Mammary epithelial cell (primary cell): ENCODE measurements at regions of chr3 and their contacts with region 1.

Region 1: DNA sequence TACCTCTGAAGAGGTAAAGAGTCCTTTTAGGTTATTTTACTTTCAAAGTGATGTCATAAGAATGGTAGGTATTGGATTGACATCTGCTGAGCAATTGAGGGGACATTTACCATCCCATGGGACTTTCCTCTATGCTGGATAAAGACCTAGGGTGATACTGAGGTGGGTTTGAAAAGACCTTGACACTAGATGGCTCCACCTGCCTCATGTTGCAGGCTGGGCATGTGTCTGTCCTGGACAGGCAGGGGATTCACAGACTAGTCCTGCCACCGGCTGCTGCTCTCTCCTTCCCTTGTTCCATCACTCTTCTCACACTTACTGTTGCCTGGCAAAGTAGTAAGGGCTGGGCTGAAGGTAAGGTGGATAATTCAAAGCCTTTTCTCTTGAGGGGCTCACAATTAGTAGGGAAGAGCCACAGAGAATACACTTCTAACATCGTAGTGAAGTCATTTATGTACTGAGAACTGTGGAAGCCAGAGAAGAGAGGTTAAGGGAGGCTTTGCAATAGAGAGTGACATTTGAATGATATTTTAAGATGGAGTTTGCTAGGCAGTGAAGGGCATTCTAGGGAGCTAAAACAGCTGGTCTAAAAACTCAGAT is 27.7 kb downstream of the TRAK1 start:
- DNase-seq: peak; percentile 66
- H3K4me3 ChIP-seq: no peak overlapping the region
- H3K27ac ChIP-seq: peak overlapping the region; percentile 30
- H3K4me1 ChIP-seq: peaks cover 73% of the 10 kb centered on the region
- H3K27me3 ChIP-seq: no peaks in the 10 kb centered on the region
- CTCF ChIP-seq: peak; percentile 43 to 62

Region 2: DNA sequence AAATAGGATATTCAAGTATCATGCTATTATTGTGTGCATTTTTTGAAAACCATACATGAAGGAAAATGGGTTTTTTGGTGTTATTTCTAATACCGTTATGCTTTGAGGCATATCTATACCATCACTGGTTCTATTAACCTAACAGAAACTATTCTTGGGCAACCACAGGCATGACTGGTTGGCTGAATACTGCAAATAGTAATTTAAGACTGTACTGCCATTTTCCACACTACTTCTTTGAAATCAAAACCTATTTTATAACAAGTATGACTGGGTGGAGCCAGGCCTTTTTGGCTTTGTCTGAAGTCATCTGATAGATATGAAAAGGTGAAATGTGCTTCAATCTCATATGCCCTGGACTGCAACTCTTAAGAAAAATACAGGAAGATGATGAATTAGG is 272.0 kb before region 1 on chr3:
- CTCF ChIA-PET with region 1: no interaction called
- dilution Hi-C with region 1: no loop called
- in situ Hi-C with region 1: no loop called
- intact Hi-C with region 1: no loop called
- DNase-seq: no peak
- H3K4me3 ChIP-seq: no peak overlapping the region
- H3K27ac ChIP-seq: no peak overlapping the region
- H3K4me1 ChIP-seq: no peaks in the 10 kb centered on the region
- H3K27me3 ChIP-seq: no peaks in the 10 kb centered on the region
- CTCF ChIP-seq: no peak

Region 3: GRCh38 chr3:42159706-42160472 is 41.0 kb after region 1 on chr3:
- CTCF ChIA-PET with region 1: interaction called, 3 read pairs
- dilution Hi-C with region 1: no loop called
- in situ Hi-C with region 1: no loop called
- intact Hi-C with region 1: loop called (anchors 2 kb)
- DNase-seq: peak; percentile 79
- H3K4me3 ChIP-seq: peak overlapping the region; percentile 44 to 59 (median 52)
- H3K27ac ChIP-seq: peak overlapping the region; percentile 76
- H3K4me1 ChIP-seq: peaks cover 32% of the 10 kb centered on the region
- H3K27me3 ChIP-seq: no peaks in the 10 kb centered on the region
- CTCF ChIP-seq: no peak

Region 4: DNA sequence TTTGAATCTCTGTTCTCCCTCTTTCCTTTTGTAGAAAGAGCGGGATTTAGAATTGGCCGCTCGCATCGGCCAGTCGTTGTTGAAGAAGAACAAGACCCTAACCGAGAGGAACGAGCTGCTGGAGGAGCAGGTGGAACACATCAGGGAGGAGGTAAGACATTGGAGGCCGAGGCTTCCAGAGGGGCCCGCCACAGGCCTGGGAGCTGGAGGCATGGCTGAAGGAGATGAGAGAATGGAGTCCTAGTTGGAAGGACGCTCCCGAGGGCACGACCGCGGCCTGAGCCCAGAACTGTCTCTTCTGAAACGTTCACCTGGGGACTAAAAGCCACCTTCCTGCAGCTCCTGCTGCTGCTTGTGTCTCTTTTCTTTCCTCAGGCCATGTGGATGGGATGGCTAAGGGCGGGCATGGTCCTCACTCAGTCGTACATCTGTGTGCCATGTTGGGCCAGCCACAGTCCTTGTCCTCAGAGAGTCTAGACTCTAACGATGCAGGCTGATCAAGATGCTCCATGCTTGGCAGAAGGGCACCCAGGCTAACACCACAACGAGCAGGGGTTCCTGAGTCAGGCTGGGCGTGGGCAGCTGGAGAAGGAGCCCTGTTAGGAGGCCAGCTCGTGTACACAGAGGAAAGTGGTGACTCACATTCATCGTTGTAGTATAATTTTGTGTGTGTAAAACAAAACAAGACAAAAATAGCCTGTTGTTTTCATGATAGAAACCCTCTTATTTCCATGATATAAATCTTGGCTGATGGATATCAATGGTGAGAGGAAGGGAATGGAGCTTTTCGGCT is 66.0 kb after region 1 on chr3:
- CTCF ChIA-PET with region 1: interaction called, 3 read pairs
- dilution Hi-C with region 1: no loop called
- in situ Hi-C with region 1: loop called (anchors 5 to 10 kb)
- intact Hi-C with region 1: no loop called
- DNase-seq: peak; percentile 85
- H3K4me3 ChIP-seq: no peak overlapping the region
- H3K27ac ChIP-seq: peak overlapping the region; percentile 29
- H3K4me1 ChIP-seq: peaks cover 48% of the 10 kb centered on the region
- H3K27me3 ChIP-seq: no peaks in the 10 kb centered on the region
- CTCF ChIP-seq: no peak

Region 5: DNA sequence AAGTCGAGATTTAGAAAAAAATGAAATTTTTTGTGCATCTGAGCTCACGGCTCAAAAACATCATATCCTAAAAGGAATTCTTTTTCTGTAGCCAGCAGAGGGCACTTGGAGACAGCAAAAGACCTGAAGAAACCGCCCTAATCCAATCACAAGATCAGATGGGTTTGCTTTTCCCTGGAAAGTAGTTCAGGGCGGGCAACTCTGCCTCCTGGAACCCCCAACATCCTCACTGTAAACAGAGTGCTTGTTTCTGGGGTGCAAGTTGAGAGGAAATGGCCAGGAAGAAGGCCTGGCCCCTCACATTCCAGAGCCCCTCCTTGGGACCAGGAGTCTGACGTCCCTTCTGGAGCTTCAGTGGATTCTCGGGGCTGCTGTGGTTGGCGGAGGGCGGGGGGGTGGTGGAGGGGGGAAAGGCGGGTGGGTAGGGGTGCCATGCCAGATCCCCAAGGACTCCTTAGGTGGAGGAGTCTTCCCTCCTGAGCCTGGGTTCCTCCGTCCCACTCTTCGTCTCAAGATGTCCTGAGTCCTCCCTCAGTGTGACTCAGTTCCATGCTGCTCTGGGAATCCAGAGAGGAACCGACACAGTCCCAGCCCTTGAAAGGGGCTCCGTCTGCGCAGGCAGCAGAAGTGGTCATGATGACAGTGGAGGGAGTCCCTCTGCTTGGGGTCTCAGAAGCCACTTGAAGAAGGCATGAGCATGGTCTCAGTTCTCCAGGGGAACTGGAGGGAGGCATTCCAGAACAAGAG is 111.3 kb after region 1 on chr3:
- CTCF ChIA-PET with region 1: interaction called, 10 read pairs
- dilution Hi-C with region 1: no loop called
- in situ Hi-C with region 1: no loop called
- intact Hi-C with region 1: loop called (anchors 1 kb)
- DNase-seq: peak; percentile 45
- H3K4me3 ChIP-seq: no peak overlapping the region
- H3K27ac ChIP-seq: no peak overlapping the region
- H3K4me1 ChIP-seq: peaks cover 9% of the 10 kb centered on the region
- H3K27me3 ChIP-seq: no peaks in the 10 kb centered on the region
- CTCF ChIP-seq: peak; percentile 51 to 65